Gastrocnemius medialis (tissue), 4 donors: ENCODE measurements at regions of chr1 and their contacts with region 1.

Region 1: DNA sequence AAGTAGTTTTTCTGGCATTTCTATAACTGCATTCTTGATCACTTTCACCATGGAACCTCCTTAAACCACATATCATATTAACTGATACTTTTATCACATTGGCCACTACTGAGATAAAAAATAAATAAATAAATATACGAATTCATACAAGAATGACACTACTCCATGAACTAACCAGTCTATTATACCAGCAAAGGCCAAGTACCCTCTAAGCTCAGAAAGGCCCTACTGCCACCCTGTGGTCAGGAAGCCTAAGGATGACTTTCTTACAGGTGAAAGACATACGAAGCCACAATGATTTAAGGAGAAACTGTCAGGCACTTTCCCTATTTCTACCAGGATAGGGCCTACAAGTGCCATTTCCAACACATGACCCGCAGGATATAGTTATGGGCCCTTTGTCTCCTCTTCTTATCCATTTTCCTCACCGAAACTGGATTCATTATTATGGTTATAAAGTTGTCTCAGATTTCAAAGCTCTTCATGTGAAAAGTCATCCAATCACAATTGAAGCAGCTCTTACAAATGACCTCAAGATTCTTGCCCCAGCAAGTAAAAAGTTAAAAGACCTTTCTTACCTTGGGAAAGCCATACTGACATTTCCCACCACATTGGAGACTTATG is 23.9 kb downstream of the DNAJC8 start:
- DNase-seq: peak in 1 of 2 donors; percentile 59
- ATAC-seq: peak; percentile 82 to 84
- H3K4me3 ChIP-seq: no peak overlapping the region
- H3K27ac ChIP-seq: peak overlapping the region; percentile 51 to 76 (median 72)
- H3K4me1 ChIP-seq: peaks cover 29 to 36% of the 10 kb centered on the region in 2 donors
- H3K27me3 ChIP-seq: no peaks in the 10 kb centered on the region
- CTCF ChIP-seq: peak; percentile 52 to 71 (median 64)
- POLR2A ChIP-seq: no peak

Region 2: GRCh38 chr1:28088168-28088961 is 120.6 kb before region 1 on chr1 and contains the start of gene EYA3:
- in situ Hi-C with region 1: loop called (anchors 5 to 10 kb)
- intact Hi-C with region 1: loop called (anchors 1 kb)
- DNase-seq: peak; percentile 95 to 99
- ATAC-seq: peak; percentile 98
- H3K4me3 ChIP-seq: peak within 1 kb of the TSS; percentile 62 to 89 (median 72)
- H3K27ac ChIP-seq: peak within 1 kb of the TSS; percentile 87 to 91 (median 89)
- H3K4me1 ChIP-seq: peaks cover 22 to 43% of the 10 kb centered on the region in 2 donors
- H3K27me3 ChIP-seq: no peaks in the 10 kb centered on the region
- CTCF ChIP-seq: no peak
- POLR2A ChIP-seq: peak; percentile 61 to 74
- total RNA-seq, gene EYA3: 9.2 to 19.5 (median 15.4) TPM

Region 3: DNA sequence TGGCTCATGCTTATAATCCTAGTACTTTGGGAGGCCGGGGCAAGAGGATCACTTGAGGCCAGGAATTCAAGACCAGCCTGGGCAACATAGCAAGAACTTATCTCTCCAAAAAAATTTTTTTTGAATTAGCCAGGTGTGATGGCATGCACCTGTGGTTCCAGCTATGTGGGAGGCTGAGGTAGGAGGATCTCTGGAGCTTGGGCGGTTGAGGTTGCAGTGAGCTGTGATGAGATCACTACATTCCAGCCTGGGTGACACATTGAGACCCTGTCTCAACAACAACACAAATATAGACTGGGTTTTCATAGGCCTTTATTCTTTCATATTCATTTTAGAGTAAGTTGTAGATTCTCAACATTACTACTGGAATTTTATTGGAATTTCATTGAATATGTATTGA is 132.7 kb after region 1 on chr1:
- in situ Hi-C with region 1: no loop called
- intact Hi-C with region 1: no loop called
- DNase-seq: no peak
- ATAC-seq: no peak
- H3K4me3 ChIP-seq: no peak overlapping the region
- H3K27ac ChIP-seq: no peak overlapping the region
- H3K4me1 ChIP-seq: no peaks in the 10 kb centered on the region
- H3K27me3 ChIP-seq: no peaks in the 10 kb centered on the region
- CTCF ChIP-seq: no peak
- POLR2A ChIP-seq: no peak